ENCODE measurements at regions of chr2 and their contacts with region 1.

Region 1: GRCh38 chr2:71545572-71546274 is 92.4 kb downstream of the DYSF start:
- DNase-seq: peak; percentile 78 to 80
- ATAC-seq: peak; percentile 88 to 92
- H3K4me3 ChIP-seq: peak overlapping the region; percentile 16; the same call in 1 of the 3 replicates
- H3K27ac ChIP-seq: no peak overlapping the region
- H3K4me1 ChIP-seq: peaks cover 8% of the 10 kb centered on the region
- CTCF ChIP-seq: peak; percentile 97
- EP300 ChIP-seq: no peak
- POLR2A ChIP-seq: no peak
- RAD21 ChIP-seq: peak; percentile 97 to 99

Region 2: DNA sequence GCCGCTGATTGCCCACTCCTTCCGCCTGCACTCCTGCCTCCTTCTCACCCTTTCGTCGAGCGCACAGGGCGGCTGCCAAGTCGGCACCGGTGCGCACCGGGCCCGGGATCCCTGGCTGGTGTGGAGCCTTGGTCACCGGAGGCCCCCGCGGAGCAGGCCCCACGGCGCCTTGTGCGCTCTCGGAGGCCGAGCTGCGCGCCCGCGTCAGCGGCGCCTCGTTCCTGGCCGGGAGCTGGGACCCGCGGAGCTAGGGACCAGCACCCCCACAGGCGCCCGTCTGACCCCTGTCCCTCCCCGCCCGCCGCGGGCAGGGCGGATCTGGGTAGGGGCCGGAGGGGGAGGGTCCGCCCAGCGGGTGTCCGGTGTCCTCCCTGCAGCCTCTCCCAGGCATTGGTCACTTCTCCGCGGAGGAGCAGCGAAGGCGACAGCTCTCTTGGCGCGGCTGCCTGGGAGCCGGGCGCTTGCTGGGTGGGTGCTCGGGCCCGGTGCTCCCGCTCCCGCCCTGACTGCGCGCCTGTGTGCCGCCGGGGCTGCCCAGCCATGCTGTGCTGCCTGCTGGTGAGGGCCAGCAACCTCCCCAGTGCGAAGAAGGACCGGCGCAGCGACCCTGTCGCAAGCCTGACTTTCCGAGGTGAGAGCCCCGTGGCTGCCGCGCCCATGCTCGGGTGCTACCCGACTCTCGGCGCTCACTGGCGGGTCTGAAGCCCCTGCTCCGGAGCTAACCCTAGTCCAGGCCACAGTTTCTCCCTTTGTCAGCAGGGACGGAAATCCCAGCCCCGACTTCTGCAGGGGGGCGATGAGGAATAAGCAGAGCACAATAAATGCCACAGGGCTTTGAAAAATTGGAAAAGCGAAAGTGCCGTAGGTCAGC is 79.2 kb before region 1 on chr2:
- CTCF ChIA-PET with region 1: no interaction called
- POLR2A ChIA-PET with region 1: no interaction called
- DNase-seq: peak; percentile 41 to 46
- ATAC-seq: peak; percentile 55 to 78
- H3K4me3 ChIP-seq: peak overlapping the region; percentile 57
- H3K27ac ChIP-seq: peak overlapping the region; percentile 30 to 79; a peak in 5 of 6 replicates
- H3K4me1 ChIP-seq: no peaks in the 10 kb centered on the region
- CTCF ChIP-seq: no peak
- EP300 ChIP-seq: no peak
- POLR2A ChIP-seq: no peak
- RAD21 ChIP-seq: no peak

Region 3: DNA sequence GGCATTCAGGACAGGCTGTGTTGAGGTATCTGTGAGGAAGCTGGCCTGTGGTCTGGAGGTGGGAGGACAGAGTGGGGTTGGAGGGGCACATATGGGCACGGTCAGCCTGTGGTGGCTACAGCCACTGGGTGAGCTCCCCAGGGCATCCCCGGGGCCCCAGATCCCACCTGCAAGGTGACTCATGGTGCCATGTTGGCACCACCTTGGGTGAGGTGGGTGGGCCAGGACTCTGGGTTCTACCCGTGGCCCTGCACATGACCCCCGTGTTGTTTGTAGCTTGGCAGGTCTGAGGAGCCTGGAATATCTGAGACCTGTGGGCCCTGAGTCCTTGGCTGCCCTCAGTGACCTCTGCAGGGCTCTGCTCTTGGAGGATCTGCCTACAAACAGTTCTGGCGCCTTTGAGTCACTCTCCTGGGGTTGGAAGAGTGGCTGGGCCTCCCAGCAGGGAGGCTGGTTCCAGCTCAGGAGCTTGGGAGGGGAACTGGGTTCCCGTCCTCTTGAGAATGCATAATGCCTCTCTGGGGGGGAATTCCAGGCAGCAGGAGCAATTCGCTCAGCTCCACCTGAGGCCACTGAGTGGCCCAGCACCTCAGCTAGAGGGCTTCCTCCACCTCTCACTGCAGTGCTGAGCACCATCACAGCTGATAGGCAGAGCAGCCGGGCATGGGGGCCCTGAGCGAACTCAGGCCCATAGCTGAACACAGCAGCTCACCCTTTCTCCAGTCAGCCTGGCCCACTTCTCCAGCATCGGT is 12.8 kb after region 1 on chr2:
- CTCF ChIA-PET with region 1: interaction called, 62 read pairs
- POLR2A ChIA-PET with region 1: no interaction called
- DNase-seq: peak; percentile 38 to 50
- ATAC-seq: peak; percentile 46 to 63
- H3K4me3 ChIP-seq: no peak overlapping the region
- H3K27ac ChIP-seq: peak overlapping the region; percentile 40 to 66; a peak in 5 of 6 replicates
- H3K4me1 ChIP-seq: peaks cover 19% of the 10 kb centered on the region
- CTCF ChIP-seq: no peak
- EP300 ChIP-seq: no peak
- POLR2A ChIP-seq: no peak
- RAD21 ChIP-seq: no peak

Region 4: GRCh38 chr2:71778936-71779773 is 233.4 kb after region 1 on chr2:
- CTCF ChIA-PET with region 1: interaction called, 30 read pairs
- POLR2A ChIA-PET with region 1: no interaction called
- DNase-seq: peak in 1 of 2 experiments; percentile 42
- ATAC-seq: peak; percentile 50 to 68; a peak in 4 of 6 replicates
- H3K4me3 ChIP-seq: no peak overlapping the region
- H3K27ac ChIP-seq: peak overlapping the region; percentile 52 to 66; a peak in 4 of 6 replicates
- H3K4me1 ChIP-seq: peaks cover 28% of the 10 kb centered on the region
- CTCF ChIP-seq: peak; percentile 50
- EP300 ChIP-seq: no peak
- POLR2A ChIP-seq: no peak
- RAD21 ChIP-seq: peak; percentile 69 to 76

Region 5: DNA sequence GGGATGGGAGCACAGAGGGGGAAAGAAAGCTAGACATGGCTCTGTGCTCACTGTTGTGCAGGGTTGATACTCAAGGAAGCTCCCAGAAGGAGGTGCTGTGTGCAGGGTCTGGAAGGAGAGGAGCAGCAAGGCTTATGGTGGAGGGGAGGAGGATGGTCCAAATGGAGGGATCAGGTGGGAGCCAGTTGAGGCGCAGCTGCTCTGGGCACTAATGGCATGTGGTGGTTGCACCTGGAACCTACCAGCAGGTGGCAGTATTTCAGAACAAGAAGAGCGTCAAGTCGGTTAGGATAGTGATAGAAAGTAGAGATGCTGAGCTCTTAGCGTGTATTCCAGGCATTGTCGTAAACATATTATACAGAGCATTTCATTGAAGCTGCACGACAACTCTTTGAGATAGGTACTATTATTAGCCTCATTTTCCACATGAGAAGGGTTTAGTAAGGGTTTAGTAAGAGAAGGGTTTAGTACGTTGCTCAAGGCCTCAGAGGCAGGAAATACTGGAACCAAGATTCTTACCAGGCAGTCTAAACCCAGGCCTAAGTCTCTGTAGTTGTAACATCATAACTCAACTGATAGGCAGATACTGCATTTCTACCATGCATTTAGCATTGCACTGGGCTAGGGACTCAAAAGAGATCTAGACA is 378.3 kb after region 1 on chr2:
- CTCF ChIA-PET with region 1: interaction called, 20 read pairs
- POLR2A ChIA-PET with region 1: no interaction called
- DNase-seq: peak; percentile 77 to 83
- ATAC-seq: peak; percentile 78 to 94
- H3K4me3 ChIP-seq: no peak overlapping the region
- H3K27ac ChIP-seq: no peak overlapping the region
- H3K4me1 ChIP-seq: peaks cover 6% of the 10 kb centered on the region; the same call in 1 of the 3 replicates
- CTCF ChIP-seq: peak; percentile 93
- EP300 ChIP-seq: no peak
- POLR2A ChIP-seq: no peak
- RAD21 ChIP-seq: peak; percentile 87 to 89

Region 6: GRCh38 chr2:72579591-72580180 is 1034.0 kb after region 1 on chr2:
- CTCF ChIA-PET with region 1: interaction called, 15 read pairs
- POLR2A ChIA-PET with region 1: no interaction called
- DNase-seq: peak in 1 of 2 experiments; percentile 74
- ATAC-seq: peak; percentile 47 to 79; a peak in 4 of 6 replicates
- H3K4me3 ChIP-seq: no peak overlapping the region
- H3K27ac ChIP-seq: no peak overlapping the region; a peak in 1 of 6 replicates
- H3K4me1 ChIP-seq: peaks cover 23% of the 10 kb centered on the region
- CTCF ChIP-seq: peak; percentile 97
- EP300 ChIP-seq: no peak
- POLR2A ChIP-seq: no peak
- RAD21 ChIP-seq: peak; percentile 94 to 97

Measured in A549 (cell line).